Activated CD4-positive, alpha-beta memory T cell treated with anti-CD3 and anti-CD28 coated beads for 36 hours (primary cell): ENCODE measurements at regions of chr15 and their contacts with region 1.

Region 1: GRCh38 chr15:68210821-68211655 is 5.9 kb upstream of the CALML4 start:
- DNase-seq: peak; percentile 64
- H3K4me3 Mint-ChIP-seq: no peak overlapping the region
- H3K27ac Mint-ChIP-seq: no peak overlapping the region
- H3K4me1 Mint-ChIP-seq: peaks cover 23% of the 10 kb centered on the region
- H3K27me3 Mint-ChIP-seq: no peaks in the 10 kb centered on the region

Region 2: GRCh38 chr15:68229386-68230156 is 18.5 kb after region 1 on chr15 and contains the start of gene CLN6:
- CTCF ChIA-PET with region 1: interaction called, 5 read pairs
- POLR2A ChIA-PET with region 1: interaction called, 4 read pairs
- intact Hi-C with region 1: loop called (anchors 2 kb)
- DNase-seq: peak; percentile 83
- H3K4me3 Mint-ChIP-seq: peak within 1 kb of the TSS; percentile 84
- H3K27ac Mint-ChIP-seq: peak within 1 kb of the TSS; percentile 72
- H3K4me1 Mint-ChIP-seq: peaks cover 34% of the 10 kb centered on the region
- H3K27me3 Mint-ChIP-seq: no peaks in the 10 kb centered on the region
- total RNA-seq, gene CLN6: 32.9 to 34.2 TPM